CD4-positive, alpha-beta T cell (primary cell): ENCODE measurements at regions of chr1 and their contacts with region 1.

Region 1: GRCh38 chr1:71080739-71081696 is at the start of gene ZRANB2:
- DNase-seq: peak; percentile 82 to 97 (median 88)
- ATAC-seq: peak; percentile 97
- H3K4me3 ChIP-seq: peak within 1 kb of the TSS; percentile 95
- H3K4me3 Mint-ChIP-seq: peak within 1 kb of the TSS; percentile 97
- H3K27ac ChIP-seq: peak within 1 kb of the TSS; percentile 94 to 97
- H3K27ac Mint-ChIP-seq: peak within 1 kb of the TSS; percentile 100
- H3K4me1 ChIP-seq: peaks cover 9% of the 10 kb centered on the region
- H3K4me1 Mint-ChIP-seq: peaks cover 52% of the 10 kb centered on the region
- H3K27me3 ChIP-seq: peaks cover 6 to 21% of the 10 kb centered on the region in 2 experiments
- H3K27me3 Mint-ChIP-seq: peaks cover 28% of the 10 kb centered on the region
- CTCF ChIP-seq: peak; percentile 54
- total RNA-seq, gene ZRANB2: 102 TPM

Region 2: DNA sequence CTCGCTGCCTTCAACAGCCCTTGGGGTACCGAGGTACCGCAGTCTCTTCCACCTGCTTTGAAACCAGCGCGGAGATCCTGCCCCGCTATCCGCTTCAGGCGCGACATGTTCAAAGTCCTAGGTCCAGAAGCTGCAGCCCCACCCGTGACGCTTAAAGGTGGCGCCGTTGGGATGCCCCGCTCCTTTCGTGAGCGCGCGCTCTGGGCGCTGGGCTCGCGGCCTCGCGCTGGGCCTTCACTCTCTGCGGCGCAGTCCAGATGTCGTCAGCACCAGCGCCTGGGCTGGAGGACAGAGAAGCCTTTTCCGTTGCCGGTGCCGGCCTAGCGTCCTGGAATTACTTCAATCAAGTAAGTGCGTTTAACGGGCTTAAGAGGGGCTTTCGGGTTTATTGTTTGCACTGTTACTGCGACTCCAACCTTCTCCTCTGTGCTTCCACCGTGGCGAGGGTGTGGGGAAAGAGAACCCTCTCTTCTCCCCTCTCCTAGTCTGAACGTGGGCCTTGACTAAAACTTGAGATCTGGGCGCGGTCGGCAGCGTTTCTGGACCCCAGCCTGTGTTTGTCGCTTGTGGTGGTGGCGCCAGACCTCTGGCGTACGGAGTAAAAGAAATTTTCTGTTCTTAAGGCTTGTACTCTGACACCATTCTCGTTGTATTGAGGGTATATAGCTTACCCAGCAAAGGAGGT is 875.4 kb before region 1 on chr1 and contains the start of gene LRRC40:
- CTCF ChIA-PET with region 1: interaction called, 5 read pairs
- POLR2A ChIA-PET with region 1: interaction called, 25 read pairs
- intact Hi-C with region 1: loop called (anchors 1 to 2 kb)
- DNase-seq: peak; percentile 88 to 98 (median 95)
- ATAC-seq: peak; percentile 90
- H3K4me3 ChIP-seq: peak within 1 kb of the TSS; percentile 81
- H3K4me3 Mint-ChIP-seq: peak within 1 kb of the TSS; percentile 99
- H3K27ac ChIP-seq: peak within 1 kb of the TSS; percentile 85 to 97
- H3K27ac Mint-ChIP-seq: peak within 1 kb of the TSS; percentile 99
- H3K4me1 ChIP-seq: peaks cover 38% of the 10 kb centered on the region
- H3K4me1 Mint-ChIP-seq: peaks cover 84% of the 10 kb centered on the region
- H3K27me3 ChIP-seq: no peaks in the 10 kb centered on the region
- H3K27me3 Mint-ChIP-seq: no peaks in the 10 kb centered on the region
- CTCF ChIP-seq: no peak
- total RNA-seq, gene LRRC40: 12.4 to 13.3 TPM

Region 3: GRCh38 chr1:70354332-70355110 is 726.5 kb before region 1 on chr1 and contains the start of gene ANKRD13C:
- CTCF ChIA-PET with region 1: interaction called, 3 read pairs
- POLR2A ChIA-PET with region 1: interaction called, 21 read pairs
- intact Hi-C with region 1: loop called (anchors 5 to 10 kb)
- DNase-seq: peak; percentile 79 to 97 (median 86)
- ATAC-seq: peak; percentile 89
- H3K4me3 ChIP-seq: peak within 1 kb of the TSS; percentile 98
- H3K4me3 Mint-ChIP-seq: peak within 1 kb of the TSS; percentile 91
- H3K27ac ChIP-seq: peak within 1 kb of the TSS; percentile 94 to 95
- H3K27ac Mint-ChIP-seq: peak within 1 kb of the TSS; percentile 97
- H3K4me1 ChIP-seq: peaks cover 28% of the 10 kb centered on the region
- H3K4me1 Mint-ChIP-seq: peaks cover 50% of the 10 kb centered on the region
- H3K27me3 ChIP-seq: no peaks in the 10 kb centered on the region
- H3K27me3 Mint-ChIP-seq: no peaks in the 10 kb centered on the region
- CTCF ChIP-seq: no peak
- total RNA-seq, gene ANKRD13C: 37.4 to 37.8 TPM

Region 4: GRCh38 chr1:70410604-70411359 is 670.2 kb before region 1 on chr1 and contains the start of gene CTH:
- CTCF ChIA-PET with region 1: interaction called, 7 read pairs
- POLR2A ChIA-PET with region 1: interaction called, 26 read pairs
- intact Hi-C with region 1: loop called (anchors 2 to 5 kb)
- DNase-seq: peak; percentile 76 to 97 (median 89)
- ATAC-seq: peak; percentile 91
- H3K4me3 ChIP-seq: peak within 1 kb of the TSS; percentile 94
- H3K4me3 Mint-ChIP-seq: peak within 1 kb of the TSS; percentile 96
- H3K27ac ChIP-seq: peak within 1 kb of the TSS; percentile 82 to 96
- H3K27ac Mint-ChIP-seq: peak within 1 kb of the TSS; percentile 97
- H3K4me1 ChIP-seq: peaks cover 10% of the 10 kb centered on the region
- H3K4me1 Mint-ChIP-seq: peaks cover 31% of the 10 kb centered on the region
- H3K27me3 ChIP-seq: no peaks in the 10 kb centered on the region
- H3K27me3 Mint-ChIP-seq: peaks cover 6% of the 10 kb centered on the region
- CTCF ChIP-seq: no peak
- total RNA-seq, gene CTH: 5.6 to 7.9 TPM

Region 5: DNA sequence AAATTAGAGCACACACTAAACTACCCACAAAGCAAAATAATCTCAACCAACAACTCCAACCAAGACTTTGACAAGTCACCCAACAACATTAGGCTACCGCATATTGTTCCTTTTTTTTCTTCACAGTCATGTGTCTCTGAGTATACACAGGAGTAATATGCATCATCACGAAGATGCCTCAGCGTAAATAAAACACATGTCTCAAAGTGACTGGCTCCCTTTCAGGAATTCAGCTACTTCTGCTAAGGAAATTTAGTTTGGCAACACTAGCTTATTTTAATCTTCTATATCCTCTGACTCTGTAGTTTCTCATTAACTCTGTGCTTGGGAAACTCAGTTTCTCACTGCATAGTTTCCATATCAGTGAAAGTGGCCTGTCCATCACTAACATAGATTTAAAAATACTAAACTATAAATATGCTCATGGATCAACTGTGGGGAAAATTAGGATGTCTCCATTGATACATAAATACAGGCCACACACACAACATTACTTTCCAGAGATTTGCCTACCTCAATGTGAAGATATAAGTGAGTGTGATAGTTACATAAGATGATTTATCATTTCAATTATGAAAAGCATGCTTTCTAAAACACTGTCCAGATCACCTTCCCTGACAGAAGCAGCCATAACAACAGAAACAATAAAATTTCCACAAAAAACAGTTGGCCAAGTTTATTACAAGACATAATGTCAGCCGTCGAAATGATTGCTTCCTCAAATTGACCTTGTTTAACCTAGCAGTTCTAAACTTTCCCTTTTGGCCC is 146.6 kb before region 1 on chr1:
- CTCF ChIA-PET with region 1: no interaction called
- POLR2A ChIA-PET with region 1: no interaction called
- intact Hi-C with region 1: no loop called
- DNase-seq: no peak
- ATAC-seq: no peak
- H3K4me3 ChIP-seq: no peak overlapping the region
- H3K4me3 Mint-ChIP-seq: no peak overlapping the region
- H3K27ac ChIP-seq: no peak overlapping the region
- H3K27ac Mint-ChIP-seq: no peak overlapping the region
- H3K4me1 ChIP-seq: no peaks in the 10 kb centered on the region
- H3K4me1 Mint-ChIP-seq: no peaks in the 10 kb centered on the region
- H3K27me3 ChIP-seq: no peaks in the 10 kb centered on the region
- H3K27me3 Mint-ChIP-seq: no peaks in the 10 kb centered on the region
- CTCF ChIP-seq: no peak

Region 6: GRCh38 chr1:71049951-71050598 is 30.9 kb before region 1 on chr1:
- CTCF ChIA-PET with region 1: interaction called, 6 read pairs
- POLR2A ChIA-PET with region 1: interaction called, 5 read pairs
- intact Hi-C with region 1: loop called in 1 of 2 experiments (anchors 2 kb)
- DNase-seq: peak in 3 of 14 experiments; percentile 58 to 72 (median 67)
- ATAC-seq: peak; percentile 48
- H3K4me3 ChIP-seq: no peak overlapping the region
- H3K4me3 Mint-ChIP-seq: peak overlapping the region; percentile 44
- H3K27ac ChIP-seq: no peak overlapping the region
- H3K27ac Mint-ChIP-seq: no peak overlapping the region
- H3K4me1 ChIP-seq: peaks cover 19% of the 10 kb centered on the region
- H3K4me1 Mint-ChIP-seq: peaks cover 22% of the 10 kb centered on the region
- H3K27me3 ChIP-seq: peaks cover 27 to 36% of the 10 kb centered on the region in 2 experiments
- H3K27me3 Mint-ChIP-seq: peaks cover 41% of the 10 kb centered on the region
- CTCF ChIP-seq: peak; percentile 76

Region 7: GRCh38 chr1:71068325-71069240 is 12.4 kb before region 1 on chr1:
- CTCF ChIA-PET with region 1: interaction called, 9 read pairs
- POLR2A ChIA-PET with region 1: interaction called, 15 read pairs
- intact Hi-C with region 1: no loop called
- DNase-seq: no peak
- ATAC-seq: no peak
- H3K4me3 ChIP-seq: no peak overlapping the region
- H3K4me3 Mint-ChIP-seq: no peak overlapping the region
- H3K27ac ChIP-seq: no peak overlapping the region
- H3K27ac Mint-ChIP-seq: no peak overlapping the region
- H3K4me1 ChIP-seq: no peaks in the 10 kb centered on the region
- H3K4me1 Mint-ChIP-seq: peaks cover 10% of the 10 kb centered on the region
- H3K27me3 ChIP-seq: no peaks in the 10 kb centered on the region
- H3K27me3 Mint-ChIP-seq: no peaks in the 10 kb centered on the region
- CTCF ChIP-seq: no peak

Region 8: DNA sequence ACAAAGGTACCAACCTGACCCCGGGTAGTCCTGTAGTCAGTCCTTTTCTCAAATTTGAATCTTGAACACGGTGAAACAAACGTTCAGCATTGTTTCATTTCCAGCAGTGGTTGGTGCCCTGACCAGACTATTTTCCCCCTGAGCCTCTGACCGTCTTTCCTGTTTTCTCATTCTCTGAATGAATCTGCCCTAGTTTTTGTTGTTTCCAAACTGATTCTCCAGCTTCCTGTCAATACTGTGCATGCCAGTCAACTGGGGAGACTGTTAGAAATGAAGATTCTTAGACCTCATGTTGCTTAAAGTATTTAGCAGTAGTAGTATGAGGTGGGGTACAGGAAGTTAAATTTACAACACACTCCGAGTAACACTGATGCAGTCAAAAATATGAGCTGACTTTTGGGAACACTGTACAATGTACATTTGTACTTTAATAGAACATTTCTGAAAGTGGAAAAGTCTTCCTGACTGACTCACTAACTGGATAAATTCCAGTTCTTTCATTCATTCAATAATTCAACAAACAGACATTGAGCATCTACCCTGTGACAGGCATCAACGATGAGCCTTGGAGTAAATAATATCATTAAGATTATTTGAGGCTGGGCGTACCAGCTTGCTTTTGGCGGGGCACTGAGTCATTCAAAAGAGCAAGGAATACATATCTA is 25.8 kb after region 1 on chr1:
- CTCF ChIA-PET with region 1: no interaction called
- POLR2A ChIA-PET with region 1: no interaction called
- intact Hi-C with region 1: no loop called
- DNase-seq: no peak
- ATAC-seq: no peak
- H3K4me3 ChIP-seq: no peak overlapping the region
- H3K4me3 Mint-ChIP-seq: no peak overlapping the region
- H3K27ac ChIP-seq: no peak overlapping the region
- H3K27ac Mint-ChIP-seq: no peak overlapping the region
- H3K4me1 ChIP-seq: no peaks in the 10 kb centered on the region
- H3K4me1 Mint-ChIP-seq: no peaks in the 10 kb centered on the region
- H3K27me3 ChIP-seq: no peaks in the 10 kb centered on the region
- H3K27me3 Mint-ChIP-seq: peaks cover 23% of the 10 kb centered on the region
- CTCF ChIP-seq: no peak